Caco-2 (cell line): ENCODE measurements at regions of chr3 and their contacts with region 1.

Region 1: DNA sequence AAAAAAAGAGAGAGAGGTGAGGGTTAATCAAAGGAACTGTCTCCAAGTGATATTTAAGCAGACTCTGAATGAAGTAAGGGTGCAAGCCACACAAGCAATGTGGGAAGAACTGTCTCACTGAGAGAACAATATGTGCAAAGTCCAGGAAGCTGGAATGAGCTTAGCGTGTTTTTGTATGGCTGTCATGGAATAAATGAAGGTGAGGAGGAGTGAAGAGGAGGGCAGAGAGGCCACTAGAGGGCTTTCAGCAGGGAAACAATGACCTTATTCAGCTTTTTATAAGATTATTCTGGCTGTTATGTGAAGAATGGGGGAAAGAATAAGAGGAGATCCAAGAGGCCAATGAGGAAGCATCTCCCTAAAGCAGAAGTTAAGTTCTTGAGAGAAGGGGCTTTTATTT is 86.9 kb upstream of the COL8A1 start:
- DNase-seq: no peak
- H3K4me3 ChIP-seq: no peak overlapping the region
- H3K4me3 Mint-ChIP-seq: no peak overlapping the region
- H3K27ac Mint-ChIP-seq: no peak overlapping the region
- H3K4me1 ChIP-seq: no peaks in the 10 kb centered on the region
- H3K4me1 Mint-ChIP-seq: no peaks in the 10 kb centered on the region
- H3K27me3 ChIP-seq: no peaks in the 10 kb centered on the region
- H3K27me3 Mint-ChIP-seq: peaks cover 6% of the 10 kb centered on the region
- CTCF ChIP-seq: peak in 1 of 2 experiments; percentile 23

Region 2: DNA sequence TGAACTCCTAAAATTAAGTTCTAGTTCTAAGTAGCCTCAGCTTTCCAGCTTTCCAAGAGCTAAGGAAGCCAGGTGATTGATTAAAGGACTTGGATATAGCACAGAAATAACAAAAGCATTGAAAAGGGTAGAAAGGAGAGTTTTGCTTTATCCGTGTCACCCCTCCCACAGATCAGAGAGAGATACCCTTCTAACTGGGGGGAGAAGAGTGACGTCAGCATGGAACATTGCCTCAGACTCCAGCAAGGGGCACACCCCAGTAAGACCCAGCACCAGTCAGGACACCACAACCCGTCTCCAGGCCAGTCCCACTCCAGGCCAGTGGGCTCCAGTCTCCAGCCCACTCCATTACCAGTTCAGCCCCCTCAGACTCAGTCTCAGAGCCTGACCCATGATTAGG is 65.5 kb before region 1 on chr3:
- CTCF ChIA-PET with region 1: no interaction called
- POLR2A ChIA-PET with region 1: no interaction called
- intact Hi-C with region 1: no loop called
- DNase-seq: no peak
- H3K4me3 ChIP-seq: no peak overlapping the region
- H3K4me3 Mint-ChIP-seq: no peak overlapping the region
- H3K27ac Mint-ChIP-seq: no peak overlapping the region
- H3K4me1 ChIP-seq: no peaks in the 10 kb centered on the region
- H3K4me1 Mint-ChIP-seq: no peaks in the 10 kb centered on the region
- H3K27me3 ChIP-seq: no peaks in the 10 kb centered on the region
- H3K27me3 Mint-ChIP-seq: peaks cover 3% of the 10 kb centered on the region
- CTCF ChIP-seq: no peak

Region 3: GRCh38 chr3:99579246-99579645 is 27.7 kb after region 1 on chr3:
- CTCF ChIA-PET with region 1: no interaction called
- POLR2A ChIA-PET with region 1: no interaction called
- intact Hi-C with region 1: no loop called
- DNase-seq: no peak
- H3K4me3 ChIP-seq: no peak overlapping the region
- H3K4me3 Mint-ChIP-seq: no peak overlapping the region
- H3K27ac Mint-ChIP-seq: no peak overlapping the region
- H3K4me1 ChIP-seq: no peaks in the 10 kb centered on the region
- H3K4me1 Mint-ChIP-seq: no peaks in the 10 kb centered on the region
- H3K27me3 ChIP-seq: no peaks in the 10 kb centered on the region
- H3K27me3 Mint-ChIP-seq: peaks cover 3% of the 10 kb centered on the region
- CTCF ChIP-seq: no peak

Region 4: GRCh38 chr3:99602183-99602582 is 50.7 kb after region 1 on chr3:
- CTCF ChIA-PET with region 1: no interaction called
- POLR2A ChIA-PET with region 1: no interaction called
- intact Hi-C with region 1: loop called (anchors 1 kb)
- DNase-seq: no peak
- H3K4me3 ChIP-seq: no peak overlapping the region
- H3K4me3 Mint-ChIP-seq: no peak overlapping the region
- H3K27ac Mint-ChIP-seq: no peak overlapping the region
- H3K4me1 ChIP-seq: no peaks in the 10 kb centered on the region
- H3K4me1 Mint-ChIP-seq: no peaks in the 10 kb centered on the region
- H3K27me3 ChIP-seq: no peaks in the 10 kb centered on the region
- H3K27me3 Mint-ChIP-seq: no peaks in the 10 kb centered on the region
- CTCF ChIP-seq: no peak

Region 5: GRCh38 chr3:99659032-99659431 is 107.5 kb after region 1 on chr3:
- CTCF ChIA-PET with region 1: no interaction called
- POLR2A ChIA-PET with region 1: no interaction called
- intact Hi-C with region 1: no loop called
- DNase-seq: no peak
- H3K4me3 ChIP-seq: no peak overlapping the region
- H3K4me3 Mint-ChIP-seq: no peak overlapping the region
- H3K27ac Mint-ChIP-seq: no peak overlapping the region
- H3K4me1 ChIP-seq: no peaks in the 10 kb centered on the region
- H3K4me1 Mint-ChIP-seq: no peaks in the 10 kb centered on the region
- H3K27me3 ChIP-seq: no peaks in the 10 kb centered on the region; the same call in 1 of the 2 replicates
- H3K27me3 Mint-ChIP-seq: peaks cover 4% of the 10 kb centered on the region
- CTCF ChIP-seq: no peak